ENCODE measurements at regions of chr18 and their contacts with region 1.

Region 1: GRCh38 chr18:78561757-78562445 is 417.7 kb upstream of the SALL3 start:
- DNase-seq: no peak
- H3K4me3 ChIP-seq: no peak overlapping the region
- H3K27ac ChIP-seq: no peak overlapping the region
- H3K4me1 ChIP-seq: no peaks in the 10 kb centered on the region
- H3K27me3 ChIP-seq: peaks cover 0 to 30% of the 10 kb centered on the region in 2 donors
- CTCF ChIP-seq: no peak
- POLR2A ChIP-seq: no peak

Region 2: DNA sequence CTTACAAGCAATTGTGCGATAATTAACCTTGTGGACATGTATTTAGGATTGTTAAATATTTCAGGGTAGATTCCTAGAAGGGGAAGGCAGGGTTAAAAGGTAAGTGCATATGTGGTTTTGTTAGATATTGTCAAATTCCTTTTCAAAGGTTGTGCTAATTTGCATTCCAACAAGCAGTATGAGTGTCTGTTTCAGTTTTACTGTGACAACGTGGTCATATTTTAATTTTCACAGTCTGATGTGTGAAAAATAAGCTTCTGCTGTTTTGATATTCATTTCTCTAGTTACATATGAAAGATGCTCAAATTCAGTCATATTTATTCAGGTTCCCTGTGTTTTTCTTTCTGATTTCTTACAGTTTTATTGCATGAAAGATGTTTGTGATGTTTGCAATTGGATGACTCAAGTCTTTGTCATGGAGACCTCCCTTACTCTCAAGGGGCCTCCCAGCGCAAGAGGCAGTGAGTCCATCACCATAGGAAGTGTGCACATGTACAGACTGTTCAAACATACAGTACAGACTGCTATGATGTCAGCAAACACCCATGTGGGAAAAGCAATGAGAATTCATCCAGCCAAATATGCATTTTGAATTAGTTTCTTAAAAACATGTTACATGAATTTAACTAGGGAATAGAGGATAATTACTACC is 1001.4 kb before region 1 on chr18:
- intact Hi-C with region 1: no loop called
- DNase-seq: no peak
- H3K4me3 ChIP-seq: no peak overlapping the region
- H3K27ac ChIP-seq: no peak overlapping the region
- H3K4me1 ChIP-seq: no peaks in the 10 kb centered on the region
- H3K27me3 ChIP-seq: peaks cover 0 to 3% of the 10 kb centered on the region in 2 donors
- CTCF ChIP-seq: no peak
- POLR2A ChIP-seq: no peak

Region 3: DNA sequence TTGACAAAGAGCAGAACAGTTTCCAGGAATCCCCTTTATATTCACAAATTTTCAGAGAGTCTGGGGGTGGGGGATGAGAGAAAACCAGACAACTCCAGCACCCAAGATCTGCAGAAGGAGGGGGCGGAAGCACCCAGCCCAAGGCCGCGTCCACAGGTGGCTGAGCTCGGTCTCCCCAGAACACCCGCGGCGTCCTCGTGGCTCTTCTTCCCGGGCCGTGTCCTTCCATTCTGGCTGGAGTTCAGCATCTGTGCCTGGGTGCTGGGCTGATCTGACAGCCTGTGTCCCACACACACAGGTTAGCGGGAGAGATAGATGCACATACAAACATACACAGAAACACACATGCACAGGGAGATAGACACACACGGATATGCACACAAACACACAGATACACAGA is 38.1 kb before region 1 on chr18:
- intact Hi-C with region 1: loop called (anchors 1 kb)
- DNase-seq: no peak
- H3K4me3 ChIP-seq: no peak overlapping the region
- H3K27ac ChIP-seq: no peak overlapping the region
- H3K4me1 ChIP-seq: no peaks in the 10 kb centered on the region
- H3K27me3 ChIP-seq: peaks cover 0 to 23% of the 10 kb centered on the region in 2 donors
- CTCF ChIP-seq: no peak
- POLR2A ChIP-seq: no peak